ENCODE measurements at regions of chr16 and their contacts with region 1.

Region 1: DNA sequence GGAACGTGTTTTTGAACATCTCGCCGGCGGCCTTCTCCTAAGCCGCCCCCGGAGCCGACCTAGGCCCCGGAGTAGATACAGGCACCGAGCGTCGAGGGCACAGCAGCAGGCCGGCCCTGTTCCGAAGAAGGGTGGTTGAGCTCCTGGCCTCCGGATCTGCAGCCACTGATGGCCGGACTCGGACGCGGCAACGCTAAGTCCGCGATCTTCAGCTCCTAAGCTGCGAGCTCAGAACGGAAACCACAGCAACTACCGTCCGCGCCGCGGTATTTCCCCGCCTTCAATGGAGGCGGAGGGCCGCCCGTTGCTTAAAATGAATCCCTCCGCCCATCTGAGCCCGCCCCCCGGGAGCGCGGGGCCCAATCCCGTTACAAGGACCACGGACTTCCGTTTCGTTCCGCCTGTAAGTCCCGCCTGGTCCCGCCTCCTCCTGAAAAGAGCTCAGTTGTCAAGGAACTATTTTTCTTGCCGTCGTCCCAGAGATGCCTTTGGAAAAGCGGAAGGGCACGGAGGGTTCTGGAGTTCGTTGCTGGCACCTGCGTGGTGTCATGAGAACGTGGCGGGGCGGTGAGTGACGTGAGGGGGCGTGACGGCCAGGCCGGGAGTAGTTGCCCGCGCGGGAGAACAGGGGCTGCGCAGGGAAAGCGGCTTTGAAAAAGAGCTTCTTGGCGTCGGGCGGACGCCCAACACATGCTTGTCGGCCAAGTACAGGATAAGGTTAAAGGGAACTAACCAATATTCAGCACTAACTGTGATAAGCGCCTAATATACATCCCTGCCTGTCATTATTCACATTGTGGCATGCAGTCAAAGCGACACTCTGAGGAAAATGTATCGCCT is at the start of gene CFAP20:
- DNase-seq: peak; percentile 90
- ATAC-seq: peak; percentile 91
- H3K4me3 Mint-ChIP-seq: peak within 1 kb of the TSS; percentile 89
- H3K27ac Mint-ChIP-seq: peak within 1 kb of the TSS; percentile 85
- H3K4me1 Mint-ChIP-seq: peaks cover 48% of the 10 kb centered on the region
- H3K27me3 Mint-ChIP-seq: no peaks in the 10 kb centered on the region
- CTCF ChIP-seq: no peak
- total RNA-seq, gene CFAP20: 20.2 and 24.9 TPM in 2 replicates

Region 2: GRCh38 chr16:56505181-56505580 is 1624.1 kb before region 1 on chr16:
- CTCF ChIA-PET with region 1: no interaction called
- POLR2A ChIA-PET with region 1: no interaction called
- intact Hi-C with region 1: no loop called
- DNase-seq: no peak
- ATAC-seq: no peak
- H3K4me3 Mint-ChIP-seq: no peak overlapping the region
- H3K27ac Mint-ChIP-seq: no peak overlapping the region
- H3K4me1 Mint-ChIP-seq: no peaks in the 10 kb centered on the region
- H3K27me3 Mint-ChIP-seq: no peaks in the 10 kb centered on the region
- CTCF ChIP-seq: no peak

Region 3: DNA sequence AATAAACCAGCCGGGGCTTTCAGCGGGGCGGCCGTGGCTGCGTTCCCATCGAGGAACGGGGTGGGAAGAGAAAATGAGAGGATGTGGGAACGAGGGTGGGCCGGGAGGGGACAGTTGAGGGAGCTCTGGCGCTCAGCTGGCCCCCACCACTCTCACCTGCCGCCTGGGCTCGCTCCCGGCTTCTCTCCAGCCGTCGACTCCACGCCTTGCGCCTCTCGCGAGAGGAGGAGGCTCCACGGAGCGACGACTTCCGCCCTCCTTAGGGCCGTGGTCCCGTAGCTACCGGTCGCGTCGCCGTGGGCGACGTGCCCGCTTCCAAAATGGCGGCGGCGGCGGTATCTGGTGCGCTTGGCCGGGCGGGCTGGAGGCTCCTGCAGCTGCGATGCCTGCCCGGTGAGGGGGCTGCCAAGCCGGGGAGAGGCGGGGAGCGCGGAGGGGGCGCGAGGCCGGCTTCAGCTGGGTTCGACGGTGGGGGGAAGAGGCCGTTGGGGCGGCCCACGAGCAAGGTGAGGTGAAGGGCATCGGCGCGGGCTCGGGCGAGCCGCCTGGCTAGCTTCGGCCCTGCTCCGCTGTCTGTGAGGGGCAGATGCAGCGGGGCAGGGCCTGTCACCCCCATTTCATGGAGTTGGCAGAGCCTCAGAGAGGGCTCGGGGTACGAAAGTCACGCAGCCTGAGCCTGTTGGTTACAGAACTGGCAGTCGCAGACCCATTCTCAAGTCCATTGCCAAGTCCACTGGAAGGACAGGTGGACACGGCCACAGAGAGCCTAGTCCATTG is 681.9 kb before region 1 on chr16 and contains the starts of genes CIAPIN1 and COQ9:
- CTCF ChIA-PET with region 1: no interaction called
- POLR2A ChIA-PET with region 1: interaction called, 3 read pairs
- intact Hi-C with region 1: loop called (anchors 10 kb)
- DNase-seq: peak; percentile 82
- ATAC-seq: peak; percentile 98
- H3K4me3 Mint-ChIP-seq: peak within 1 kb of the TSS; percentile 91
- H3K27ac Mint-ChIP-seq: peak within 1 kb of the TSS; percentile 84
- H3K4me1 Mint-ChIP-seq: peaks cover 19% of the 10 kb centered on the region
- H3K27me3 Mint-ChIP-seq: no peaks in the 10 kb centered on the region
- CTCF ChIP-seq: no peak
- total RNA-seq, gene CIAPIN1: 47.1 and 52.3 TPM in 2 replicates
- total RNA-seq, gene COQ9: 30.4 and 34.1 TPM in 2 replicates

Region 4: GRCh38 chr16:57757326-57757786 is 372.0 kb before region 1 on chr16:
- CTCF ChIA-PET with region 1: no interaction called
- POLR2A ChIA-PET with region 1: no interaction called
- intact Hi-C with region 1: no loop called
- DNase-seq: peak; percentile 78
- ATAC-seq: peak; percentile 99
- H3K4me3 Mint-ChIP-seq: no peak overlapping the region
- H3K27ac Mint-ChIP-seq: no peak overlapping the region
- H3K4me1 Mint-ChIP-seq: no peaks in the 10 kb centered on the region
- H3K27me3 Mint-ChIP-seq: no peaks in the 10 kb centered on the region
- CTCF ChIP-seq: no peak

Region 5: DNA sequence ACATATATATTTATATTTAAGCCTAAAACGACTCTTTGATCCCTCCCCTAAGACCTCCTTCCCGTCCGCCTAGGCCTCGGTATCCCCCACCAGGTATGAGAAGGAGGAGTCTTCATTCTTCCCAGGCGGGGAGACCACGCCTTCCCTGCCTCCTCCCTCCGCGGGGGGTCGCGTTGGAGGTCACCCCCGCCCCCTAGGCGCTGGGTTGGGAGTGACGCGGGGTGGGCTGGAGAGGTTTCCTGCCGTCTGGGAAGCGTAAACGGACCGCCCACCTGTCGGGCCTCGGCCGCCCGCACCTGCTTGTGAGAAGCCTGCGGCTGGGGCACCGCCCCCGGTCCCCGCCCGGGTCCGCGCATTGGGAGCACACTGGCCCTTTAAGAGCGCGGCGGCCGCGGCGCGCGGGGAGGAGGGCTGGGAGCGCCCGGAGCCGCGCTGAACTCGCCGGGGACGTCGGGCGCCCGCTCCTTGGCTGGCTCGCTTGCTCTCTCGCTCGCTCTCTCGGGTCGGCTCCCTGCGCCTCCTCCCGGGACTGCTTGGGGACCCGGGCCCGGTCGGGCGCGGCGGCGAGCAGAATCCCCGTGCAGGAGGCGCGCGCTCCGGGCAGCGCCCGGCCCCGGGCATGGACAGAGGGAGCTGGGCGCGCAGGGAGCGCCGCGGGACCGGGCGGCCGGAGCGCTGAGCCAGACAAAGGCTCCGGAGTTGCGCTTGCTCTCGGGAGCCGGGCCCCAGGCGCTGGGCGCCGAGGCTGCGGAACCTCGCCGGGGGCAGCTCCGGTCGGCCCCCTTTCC is 103.8 kb before region 1 on chr16 and contains the start of gene MMP15:
- CTCF ChIA-PET with region 1: no interaction called
- POLR2A ChIA-PET with region 1: interaction called, 9 read pairs
- intact Hi-C with region 1: loop called (anchors 1 kb)
- DNase-seq: peak; percentile 47
- ATAC-seq: peak; percentile 69
- H3K4me3 Mint-ChIP-seq: peak within 1 kb of the TSS; percentile 84
- H3K27ac Mint-ChIP-seq: peak within 1 kb of the TSS; percentile 36
- H3K4me1 Mint-ChIP-seq: peaks cover 11% of the 10 kb centered on the region
- H3K27me3 Mint-ChIP-seq: peaks cover 23% of the 10 kb centered on the region
- CTCF ChIP-seq: no peak
- total RNA-seq, gene MMP15: 0.60 TPM in 1 of 2 replicates, not detected in the other

Region 6: DNA sequence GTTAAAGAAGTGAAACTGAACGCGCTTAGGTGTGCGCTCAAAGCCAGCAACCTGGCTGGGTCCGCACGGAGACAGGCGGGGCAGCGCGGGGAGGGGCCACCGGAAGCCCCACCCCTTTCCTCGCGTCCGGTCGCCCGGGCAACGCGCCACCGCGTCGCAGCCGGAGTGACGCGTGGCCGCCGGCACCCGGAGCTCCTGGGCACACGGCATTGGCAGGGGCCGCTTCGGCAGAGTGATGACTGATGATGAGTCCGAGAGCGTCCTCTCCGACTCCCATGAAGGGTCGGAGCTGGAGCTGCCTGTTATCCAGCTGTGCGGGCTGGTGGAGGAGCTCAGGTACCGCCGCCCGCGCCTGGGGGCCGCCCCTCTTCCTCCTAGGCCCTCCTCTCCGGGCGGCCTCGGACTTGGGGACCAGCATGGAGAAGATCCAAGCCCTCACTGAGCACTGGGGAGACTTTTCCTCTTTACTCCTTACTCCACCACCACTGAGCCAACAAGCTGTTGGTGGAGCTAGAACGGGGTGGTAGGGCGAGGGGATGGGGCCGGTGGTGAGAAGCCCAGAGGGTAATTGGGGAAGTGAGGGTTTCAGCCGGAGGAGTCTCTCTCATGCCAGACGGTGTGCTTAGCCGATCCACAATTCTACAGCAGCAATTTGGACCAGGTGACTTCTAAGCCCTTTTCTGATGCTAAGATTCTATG is 120.6 kb after region 1 on chr16:
- CTCF ChIA-PET with region 1: no interaction called
- POLR2A ChIA-PET with region 1: interaction called, 7 read pairs
- intact Hi-C with region 1: loop called (anchors 1 kb)
- DNase-seq: peak; percentile 93
- ATAC-seq: peak; percentile 90
- H3K4me3 Mint-ChIP-seq: peak overlapping the region; percentile 87
- H3K27ac Mint-ChIP-seq: peak overlapping the region; percentile 71
- H3K4me1 Mint-ChIP-seq: peaks cover 28% of the 10 kb centered on the region
- H3K27me3 Mint-ChIP-seq: no peaks in the 10 kb centered on the region
- CTCF ChIP-seq: no peak

Region 7: GRCh38 chr16:58392215-58393137 is 263.2 kb after region 1 on chr16 and contains the start of gene GINS3:
- CTCF ChIA-PET with region 1: no interaction called
- POLR2A ChIA-PET with region 1: interaction called, 4 read pairs
- intact Hi-C with region 1: loop called (anchors 1 kb)
- DNase-seq: peak; percentile 77
- ATAC-seq: peak; percentile 97
- H3K4me3 Mint-ChIP-seq: peak within 1 kb of the TSS; percentile 100
- H3K27ac Mint-ChIP-seq: peak within 1 kb of the TSS; percentile 97
- H3K4me1 Mint-ChIP-seq: peaks cover 15% of the 10 kb centered on the region
- H3K27me3 Mint-ChIP-seq: peaks cover 3% of the 10 kb centered on the region
- CTCF ChIP-seq: no peak
- total RNA-seq, gene GINS3: 5.3 and 6.9 TPM in 2 replicates

Region 8: GRCh38 chr16:58629572-58630104 is 500.3 kb after region 1 on chr16 and contains the start of gene CNOT1:
- CTCF ChIA-PET with region 1: no interaction called
- POLR2A ChIA-PET with region 1: interaction called, 7 read pairs
- intact Hi-C with region 1: loop called (anchors 1 kb)
- DNase-seq: peak; percentile 90
- ATAC-seq: peak; percentile 79
- H3K4me3 Mint-ChIP-seq: peak within 1 kb of the TSS; percentile 99
- H3K27ac Mint-ChIP-seq: peak within 1 kb of the TSS; percentile 100
- H3K4me1 Mint-ChIP-seq: peaks cover 35% of the 10 kb centered on the region
- H3K27me3 Mint-ChIP-seq: no peaks in the 10 kb centered on the region
- CTCF ChIP-seq: no peak
- total RNA-seq, gene CNOT1: 243 and 266 TPM in 2 replicates

Region 9: DNA sequence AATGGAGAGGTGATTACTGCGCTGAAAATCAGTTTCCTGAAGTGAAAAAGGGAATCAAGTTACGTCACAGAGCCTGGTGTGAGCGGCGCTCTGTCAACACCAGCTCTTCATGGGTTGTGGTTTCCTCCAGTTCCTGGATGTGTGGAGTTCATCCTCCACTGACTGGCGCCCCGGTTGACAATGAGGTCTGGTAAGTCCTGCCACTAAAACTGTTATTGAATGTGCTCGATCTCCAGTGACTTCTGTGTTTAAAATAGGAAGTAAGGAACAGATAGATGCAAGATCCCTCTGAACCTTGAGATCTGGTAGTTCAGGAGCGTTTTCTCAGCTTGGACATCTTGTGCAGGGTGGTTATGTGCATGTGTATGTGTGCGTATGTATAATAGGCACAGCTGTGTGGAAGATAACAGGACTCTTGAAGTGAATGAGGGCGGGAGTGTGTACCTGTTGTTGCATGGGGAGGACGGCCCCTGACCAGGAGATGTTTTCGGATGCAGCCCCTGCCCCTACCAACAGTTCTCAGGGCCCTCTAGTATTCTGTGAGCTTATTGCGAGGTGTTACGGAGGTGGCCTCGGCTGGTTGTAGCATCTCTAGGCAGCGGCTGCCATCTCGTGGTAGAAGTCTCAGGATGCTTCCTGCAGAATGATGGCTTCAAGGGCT is 626.8 kb after region 1 on chr16:
- CTCF ChIA-PET with region 1: no interaction called
- POLR2A ChIA-PET with region 1: no interaction called
- intact Hi-C with region 1: loop called (anchors 5 kb)
- DNase-seq: peak; percentile 52
- ATAC-seq: peak; percentile 99
- H3K4me3 Mint-ChIP-seq: peak overlapping the region; percentile 59
- H3K27ac Mint-ChIP-seq: peak overlapping the region; percentile 1
- H3K4me1 Mint-ChIP-seq: peaks cover 8% of the 10 kb centered on the region
- H3K27me3 Mint-ChIP-seq: no peaks in the 10 kb centered on the region
- CTCF ChIP-seq: no peak